HCT116 (cell line): ENCODE measurements at regions of chr15 and their contacts with region 1.

Region 1: GRCh38 chr15:80776420-80777045 is 2.6 kb upstream of the CEMIP start:
- DNase-seq: peak; percentile 66
- ATAC-seq: peak; percentile 52
- H3K4me3 ChIP-seq: no peak overlapping the region
- H3K27ac ChIP-seq: no peak overlapping the region
- H3K4me1 ChIP-seq: peaks cover 4 to 19% of the 10 kb centered on the region in 2 experiments; a peak in 2 of 4 replicates
- H3K27me3 ChIP-seq: no peaks in the 10 kb centered on the region
- CTCF ChIP-seq: peak; percentile 74 to 94 (median 90)
- POLR2A ChIP-seq: no peak
- RAD21 ChIP-seq: peak; percentile 93

Region 2: GRCh38 chr15:80242132-80242769 is 534.3 kb before region 1 on chr15:
- CTCF ChIA-PET with region 1: no interaction called
- POLR2A ChIA-PET with region 1: no interaction called
- RAD21 ChIA-PET with region 1: no interaction called
- intact Hi-C with region 1: loop called (anchors 10 kb)
- DNase-seq: peak; percentile 28
- ATAC-seq: peak; percentile 97
- H3K4me3 ChIP-seq: no peak overlapping the region
- H3K27ac ChIP-seq: no peak overlapping the region
- H3K4me1 ChIP-seq: peaks cover 0 to 5% of the 10 kb centered on the region in 2 experiments; a peak in 1 of 4 replicates
- H3K27me3 ChIP-seq: peaks cover 10% of the 10 kb centered on the region; the same call in 1 of the 2 replicates
- CTCF ChIP-seq: peak; percentile 62 to 95 (median 86); a peak in 5 of 6 replicates
- POLR2A ChIP-seq: no peak
- RAD21 ChIP-seq: peak; percentile 61

Region 3: DNA sequence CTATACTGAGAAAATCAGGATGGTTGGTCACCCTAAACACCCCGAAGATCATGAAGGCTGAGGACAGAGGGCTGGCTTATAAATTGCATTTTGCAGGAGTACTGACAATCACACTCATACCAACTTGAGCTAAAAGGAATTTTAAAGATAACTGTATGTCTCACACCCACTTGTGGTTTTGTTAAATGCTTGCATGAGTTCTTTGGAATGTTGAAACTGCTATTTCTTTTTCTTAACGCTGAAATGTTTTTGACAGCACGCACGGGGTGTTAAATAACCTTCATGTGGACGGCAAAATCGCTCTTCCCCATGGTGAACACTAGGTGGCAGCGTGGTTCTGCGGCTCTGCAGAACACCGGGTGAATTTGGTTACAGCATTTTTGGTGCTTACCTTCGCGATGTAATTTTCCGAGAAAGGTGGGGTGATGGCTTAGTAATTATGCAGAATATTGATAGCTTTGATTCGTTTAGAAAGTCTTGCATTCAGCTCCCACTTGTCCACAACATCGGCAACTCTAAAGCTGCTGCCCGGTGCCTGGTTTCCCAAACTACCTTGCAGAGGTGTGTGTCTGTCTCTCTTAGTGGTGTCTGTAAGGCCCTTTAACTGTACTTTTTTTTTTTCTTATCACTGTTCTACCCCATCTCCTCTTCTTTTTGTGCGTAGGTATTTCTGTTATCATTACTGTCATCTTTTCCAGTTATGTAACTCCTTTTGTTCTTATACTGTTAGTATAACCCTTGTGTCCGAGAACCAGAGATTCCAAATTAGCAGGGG is 320.7 kb before region 1 on chr15:
- CTCF ChIA-PET with region 1: interaction called, 36 read pairs
- POLR2A ChIA-PET with region 1: interaction called, 4 read pairs
- RAD21 ChIA-PET with region 1: interaction called in 1 of 2 experiments, 3 read pairs
- intact Hi-C with region 1: loop called (anchors 1 kb)
- DNase-seq: peak; percentile 44
- ATAC-seq: peak; percentile 89
- H3K4me3 ChIP-seq: no peak overlapping the region
- H3K27ac ChIP-seq: no peak overlapping the region
- H3K4me1 ChIP-seq: peaks cover 4 to 8% of the 10 kb centered on the region in 2 experiments; a peak in 3 of 4 replicates
- H3K27me3 ChIP-seq: no peaks in the 10 kb centered on the region
- CTCF ChIP-seq: peak; percentile 88 to 95 (median 89)
- POLR2A ChIP-seq: no peak
- RAD21 ChIP-seq: peak; percentile 94

Region 4: DNA sequence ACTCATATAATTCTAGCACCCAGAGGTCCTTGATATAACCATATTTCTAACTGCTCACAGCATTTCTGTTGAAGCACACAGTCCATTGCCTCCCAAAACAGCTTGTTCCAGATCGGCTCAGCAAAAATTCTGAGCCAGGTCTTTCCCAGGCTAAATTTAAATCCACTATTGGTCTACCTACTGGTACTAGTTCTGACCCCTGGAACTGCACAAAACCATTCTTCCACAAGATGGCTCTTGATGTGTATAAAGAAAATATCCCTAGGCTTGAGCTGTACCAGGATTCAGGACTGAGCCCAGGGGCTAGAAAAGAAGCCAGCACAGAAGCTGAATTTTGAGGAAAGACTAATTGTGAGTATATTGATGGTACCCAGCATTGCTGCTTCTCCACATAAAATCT is 156.9 kb before region 1 on chr15:
- CTCF ChIA-PET with region 1: interaction called, 16 read pairs
- POLR2A ChIA-PET with region 1: no interaction called
- RAD21 ChIA-PET with region 1: interaction called in 1 of 2 experiments, 6 read pairs
- intact Hi-C with region 1: no loop called
- DNase-seq: no peak
- ATAC-seq: peak; percentile 73
- H3K4me3 ChIP-seq: no peak overlapping the region
- H3K27ac ChIP-seq: no peak overlapping the region
- H3K4me1 ChIP-seq: peaks cover 0 to 7% of the 10 kb centered on the region in 2 experiments; a peak in 1 of 4 replicates
- H3K27me3 ChIP-seq: no peaks in the 10 kb centered on the region
- CTCF ChIP-seq: peak in 2 of 3 experiments; percentile 10 to 24; a peak in 2 of 6 replicates
- POLR2A ChIP-seq: no peak
- RAD21 ChIP-seq: peak; percentile 47

Region 5: DNA sequence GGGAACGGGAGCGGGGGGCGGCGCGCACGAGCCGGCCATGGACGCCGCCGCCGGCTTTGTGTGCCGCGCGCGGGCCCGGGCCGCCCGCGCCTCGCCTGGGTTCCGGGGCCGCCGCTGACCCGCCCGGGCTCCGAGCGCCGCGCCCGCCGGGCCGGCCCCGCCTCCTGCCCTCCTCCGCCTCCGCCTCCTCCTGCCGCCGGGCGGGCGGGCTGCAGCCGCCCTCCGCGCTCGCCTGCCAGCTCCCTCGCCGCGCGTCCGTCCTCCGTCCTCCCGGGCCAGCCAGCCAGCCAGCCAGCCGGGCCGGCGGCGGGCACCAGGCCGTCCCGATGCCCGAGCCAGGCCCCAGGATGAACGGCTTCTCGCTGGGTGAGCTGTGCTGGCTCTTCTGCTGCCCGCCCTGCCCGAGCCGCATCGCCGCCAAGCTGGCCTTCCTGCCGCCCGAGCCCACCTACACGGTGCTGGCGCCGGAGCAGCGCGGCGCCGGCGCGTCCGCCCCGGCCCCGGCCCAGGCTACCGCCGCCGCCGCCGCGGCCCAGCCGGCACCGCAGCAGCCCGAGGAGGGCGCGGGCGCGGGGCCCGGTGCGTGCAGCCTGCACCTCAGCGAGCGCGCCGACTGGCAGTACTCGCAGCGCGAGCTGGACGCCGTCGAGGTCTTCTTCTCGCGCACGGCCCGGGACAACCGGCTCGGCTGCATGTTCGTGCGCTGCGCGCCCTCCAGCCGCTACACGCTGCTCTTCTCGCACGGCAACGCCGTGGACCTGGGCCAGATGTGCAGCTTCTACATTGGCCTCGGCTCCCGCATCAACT is 81.2 kb before region 1 on chr15 and contains the start of gene ABHD17C:
- CTCF ChIA-PET with region 1: interaction called, 15 read pairs
- POLR2A ChIA-PET with region 1: no interaction called
- RAD21 ChIA-PET with region 1: no interaction called
- intact Hi-C with region 1: no loop called
- DNase-seq: no peak
- ATAC-seq: peak; percentile 80
- H3K4me3 ChIP-seq: peak within 1 kb of the TSS; percentile 79 to 81
- H3K27ac ChIP-seq: peak within 1 kb of the TSS; percentile 81
- H3K4me1 ChIP-seq: peaks cover 5 to 20% of the 10 kb centered on the region in 2 experiments; a peak in 3 of 4 replicates
- H3K27me3 ChIP-seq: no peaks in the 10 kb centered on the region
- CTCF ChIP-seq: no peak
- POLR2A ChIP-seq: no peak
- RAD21 ChIP-seq: no peak
- total RNA-seq, gene ABHD17C: 27.9 TPM

Region 6: GRCh38 chr15:80970018-80970658 is 193.6 kb after region 1 on chr15:
- CTCF ChIA-PET with region 1: interaction called, 59 read pairs
- POLR2A ChIA-PET with region 1: no interaction called
- RAD21 ChIA-PET with region 1: interaction called in 1 of 2 experiments, 7 read pairs
- intact Hi-C with region 1: loop called (anchors 1 kb)
- DNase-seq: peak; percentile 39
- ATAC-seq: peak; percentile 88
- H3K4me3 ChIP-seq: no peak overlapping the region
- H3K27ac ChIP-seq: no peak overlapping the region
- H3K4me1 ChIP-seq: peaks cover 6 to 10% of the 10 kb centered on the region in 2 experiments; a peak in 3 of 4 replicates
- H3K27me3 ChIP-seq: no peaks in the 10 kb centered on the region
- CTCF ChIP-seq: peak; percentile 65 to 89 (median 84)
- POLR2A ChIP-seq: no peak
- RAD21 ChIP-seq: peak; percentile 95